ENCODE measurements at regions of chr6 and their contacts with region 1.

Region 1: GRCh38 chr6:89080542-89081422 is at the start of gene PNRC1:
- DNase-seq: peak; percentile 100
- H3K4me3 Mint-ChIP-seq: peak within 1 kb of the TSS; percentile 93
- H3K27ac Mint-ChIP-seq: peak within 1 kb of the TSS; percentile 99
- H3K4me1 Mint-ChIP-seq: peaks cover 33% of the 10 kb centered on the region
- H3K27me3 Mint-ChIP-seq: no peaks in the 10 kb centered on the region
- total RNA-seq, gene PNRC1: 95.1 TPM

Region 2: GRCh38 chr6:88963139-88964090 is 117.4 kb before region 1 on chr6 and contains the start of gene RNGTT:
- CTCF ChIA-PET with region 1: no interaction called
- POLR2A ChIA-PET with region 1: interaction called, 16 read pairs
- intact Hi-C with region 1: loop called (anchors 1 kb)
- DNase-seq: peak; percentile 99
- H3K4me3 Mint-ChIP-seq: peak within 1 kb of the TSS; percentile 96
- H3K27ac Mint-ChIP-seq: peak within 1 kb of the TSS; percentile 84
- H3K4me1 Mint-ChIP-seq: peaks cover 39% of the 10 kb centered on the region
- H3K27me3 Mint-ChIP-seq: no peaks in the 10 kb centered on the region
- total RNA-seq, gene RNGTT: 21.3 to 22.0 TPM

Region 3: GRCh38 chr6:89050155-89050554 is 30.6 kb before region 1 on chr6:
- CTCF ChIA-PET with region 1: no interaction called
- POLR2A ChIA-PET with region 1: interaction called, 5 read pairs
- intact Hi-C with region 1: loop called (anchors 2 kb)
- DNase-seq: no peak
- H3K4me3 Mint-ChIP-seq: no peak overlapping the region
- H3K27ac Mint-ChIP-seq: no peak overlapping the region
- H3K4me1 Mint-ChIP-seq: peaks cover 9% of the 10 kb centered on the region
- H3K27me3 Mint-ChIP-seq: no peaks in the 10 kb centered on the region

Region 4: DNA sequence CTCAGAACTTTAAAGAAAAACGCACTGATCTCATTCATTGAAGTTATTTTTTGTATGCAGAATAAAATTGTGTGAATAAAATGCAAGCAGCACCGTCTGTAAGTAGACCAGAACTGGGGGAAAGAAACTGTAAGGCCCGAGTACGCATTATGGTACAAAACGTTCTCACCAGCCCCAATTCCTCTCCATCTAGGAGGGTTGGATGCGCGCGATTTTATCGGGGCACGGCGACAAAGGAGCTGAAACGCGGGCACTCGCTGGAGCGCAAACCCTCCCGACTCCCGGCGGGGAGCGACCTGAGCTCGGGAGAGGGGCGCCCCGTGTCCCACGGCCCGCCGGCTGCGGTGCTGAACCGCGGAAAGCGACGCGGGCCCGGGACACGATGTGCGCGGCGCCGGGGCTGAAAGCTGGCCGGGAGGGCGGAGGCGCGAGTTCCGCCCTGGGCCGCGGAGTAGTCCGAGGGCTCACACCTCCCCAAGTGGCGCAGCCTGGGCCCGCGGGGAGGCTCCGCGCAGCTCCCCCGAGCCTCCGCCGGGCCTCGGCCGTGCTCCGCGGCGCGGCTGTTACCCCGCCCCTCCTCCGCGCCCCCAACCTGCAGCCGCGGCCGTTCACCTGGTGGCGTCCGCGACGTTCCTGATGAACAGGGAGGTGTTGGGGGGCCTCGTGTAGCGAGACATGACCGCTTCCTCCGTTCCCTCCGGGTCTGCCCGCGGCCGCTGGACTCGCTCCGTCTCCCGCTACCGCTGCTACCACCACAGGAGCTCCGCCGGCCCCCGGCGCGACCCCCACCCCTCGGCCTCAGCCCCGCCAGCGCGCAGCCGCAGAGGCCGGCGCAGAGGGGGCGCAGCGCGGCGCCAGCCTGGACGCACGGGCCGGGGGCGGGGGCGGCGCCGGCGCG is 36.7 kb after region 1 on chr6 and contains the start of gene SRSF12:
- CTCF ChIA-PET with region 1: interaction called, 4 read pairs
- POLR2A ChIA-PET with region 1: interaction called, 3 read pairs
- intact Hi-C with region 1: loop called (anchors 2 kb)
- DNase-seq: peak; percentile 33
- H3K4me3 Mint-ChIP-seq: peak within 1 kb of the TSS; percentile 72
- H3K27ac Mint-ChIP-seq: no peak within 1 kb of the TSS
- H3K4me1 Mint-ChIP-seq: peaks cover 6% of the 10 kb centered on the region
- H3K27me3 Mint-ChIP-seq: peaks cover 10% of the 10 kb centered on the region
- total RNA-seq, gene SRSF12: 0.10 to 0.12 TPM

Region 5: GRCh38 chr6:89297695-89298351 is 217.0 kb after region 1 on chr6:
- CTCF ChIA-PET with region 1: no interaction called
- POLR2A ChIA-PET with region 1: interaction called, 7 read pairs
- intact Hi-C with region 1: loop called (anchors 1 kb)
- DNase-seq: peak; percentile 91
- H3K4me3 Mint-ChIP-seq: peak overlapping the region; percentile 59
- H3K27ac Mint-ChIP-seq: peak overlapping the region; percentile 78
- H3K4me1 Mint-ChIP-seq: peaks cover 26% of the 10 kb centered on the region
- H3K27me3 Mint-ChIP-seq: no peaks in the 10 kb centered on the region

Region 6: GRCh38 chr6:89412071-89413005 is 331.6 kb after region 1 on chr6 and contains the start of gene RRAGD:
- CTCF ChIA-PET with region 1: no interaction called
- POLR2A ChIA-PET with region 1: no interaction called
- intact Hi-C with region 1: loop called (anchors 2 kb)
- DNase-seq: peak; percentile 72
- H3K4me3 Mint-ChIP-seq: peak within 1 kb of the TSS; percentile 83
- H3K27ac Mint-ChIP-seq: peak within 1 kb of the TSS; percentile 38
- H3K4me1 Mint-ChIP-seq: peaks cover 18% of the 10 kb centered on the region
- H3K27me3 Mint-ChIP-seq: peaks cover 2% of the 10 kb centered on the region
- total RNA-seq, gene RRAGD: 15.8 to 16.4 TPM

Region 7: GRCh38 chr6:89829591-89830385 is 749.0 kb after region 1 on chr6 and contains the start of gene CASP8AP2:
- CTCF ChIA-PET with region 1: no interaction called
- POLR2A ChIA-PET with region 1: no interaction called
- intact Hi-C with region 1: loop called (anchors 2 kb)
- DNase-seq: peak; percentile 98
- H3K4me3 Mint-ChIP-seq: peak within 1 kb of the TSS; percentile 99
- H3K27ac Mint-ChIP-seq: peak within 1 kb of the TSS; percentile 95
- H3K4me1 Mint-ChIP-seq: peaks cover 34% of the 10 kb centered on the region
- H3K27me3 Mint-ChIP-seq: no peaks in the 10 kb centered on the region
- total RNA-seq, gene CASP8AP2: 32.4 to 34.2 TPM